Ascending aorta (tissue), 2 donors: ENCODE measurements at regions of chr12 and their contacts with region 1.

Region 1: GRCh38 chr12:55681142-55682077 is 26.3 kb downstream of the ITGA7 start:
- DNase-seq: peak; percentile 38 to 81
- H3K4me3 ChIP-seq: peak overlapping the region; percentile 4 to 34
- H3K27ac ChIP-seq: peak overlapping the region; percentile 4 to 15
- H3K4me1 ChIP-seq: peaks cover 5 to 7% of the 10 kb centered on the region in 2 donors
- H3K27me3 ChIP-seq: no peaks in the 10 kb centered on the region
- CTCF ChIP-seq: peak in 2 of 3 experiments; percentile 9 to 37

Region 2: DNA sequence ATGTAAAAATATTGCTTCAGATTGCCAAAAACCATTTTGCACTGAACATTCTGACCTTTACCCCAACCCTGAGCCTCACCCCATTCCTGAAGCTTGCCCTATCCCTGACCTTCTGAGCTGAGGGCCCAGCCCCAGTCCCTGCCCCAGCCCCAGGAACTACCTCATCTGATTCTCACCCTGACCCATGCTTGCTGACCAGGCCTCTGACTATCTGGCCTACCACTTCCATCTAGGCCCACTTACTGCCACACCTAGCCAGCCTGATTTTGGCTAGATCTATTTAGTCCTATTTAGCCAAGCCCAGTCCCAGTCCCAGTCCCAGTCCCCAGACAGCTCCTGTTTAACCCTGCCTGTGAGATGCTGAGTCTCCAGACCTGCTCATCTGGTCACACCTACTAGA is 11.1 kb before region 1 on chr12:
- intact Hi-C with region 1: no loop called
- DNase-seq: no peak
- H3K4me3 ChIP-seq: no peak overlapping the region
- H3K27ac ChIP-seq: no peak overlapping the region
- H3K4me1 ChIP-seq: no peaks in the 10 kb centered on the region
- H3K27me3 ChIP-seq: no peaks in the 10 kb centered on the region
- CTCF ChIP-seq: no peak

Region 3: DNA sequence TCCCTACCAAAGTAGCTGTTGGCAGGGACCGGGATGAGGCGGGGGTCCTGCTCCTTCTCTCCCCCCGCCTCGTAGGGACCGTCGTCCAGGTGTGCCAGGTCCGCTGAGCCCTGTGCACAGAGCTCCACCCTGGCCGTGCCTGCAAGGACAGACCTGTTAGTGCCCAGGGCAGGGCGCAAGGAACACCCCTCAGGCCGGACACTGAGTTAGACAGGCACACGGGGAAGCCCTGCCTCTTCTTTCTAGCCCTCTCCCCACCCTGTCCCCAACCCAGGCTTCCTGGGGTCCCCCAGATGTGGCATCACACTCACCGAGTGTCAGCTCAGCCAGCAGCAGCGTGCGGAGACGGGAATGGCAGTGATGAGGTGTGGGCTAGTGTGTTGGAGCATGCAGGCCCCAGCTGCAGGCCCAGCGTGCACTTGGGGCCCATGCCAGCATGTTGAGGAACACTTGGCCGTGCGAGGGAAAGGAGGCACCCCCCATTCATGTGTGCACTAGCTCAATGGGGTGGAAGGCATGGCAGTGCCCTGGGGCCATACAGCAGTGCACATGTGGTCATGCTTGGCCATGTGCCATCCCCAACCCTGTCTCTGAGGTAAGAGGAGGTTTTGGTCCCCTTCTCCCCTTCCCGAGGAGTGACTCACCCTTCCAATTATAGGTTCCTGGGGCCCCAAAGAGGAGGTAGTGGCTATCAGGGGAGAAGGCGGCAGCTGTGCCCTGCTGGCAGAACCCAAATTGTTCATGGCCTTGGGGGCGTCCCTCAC is 19.0 kb after region 1 on chr12:
- intact Hi-C with region 1: loop called (anchors 2 kb)
- DNase-seq: no peak
- H3K4me3 ChIP-seq: peak overlapping the region in 1 of 2 donors; percentile 19
- H3K27ac ChIP-seq: peak overlapping the region; percentile 42 to 47
- H3K4me1 ChIP-seq: peaks cover 2 to 32% of the 10 kb centered on the region in 2 donors
- H3K27me3 ChIP-seq: no peaks in the 10 kb centered on the region
- CTCF ChIP-seq: no peak

Region 4: DNA sequence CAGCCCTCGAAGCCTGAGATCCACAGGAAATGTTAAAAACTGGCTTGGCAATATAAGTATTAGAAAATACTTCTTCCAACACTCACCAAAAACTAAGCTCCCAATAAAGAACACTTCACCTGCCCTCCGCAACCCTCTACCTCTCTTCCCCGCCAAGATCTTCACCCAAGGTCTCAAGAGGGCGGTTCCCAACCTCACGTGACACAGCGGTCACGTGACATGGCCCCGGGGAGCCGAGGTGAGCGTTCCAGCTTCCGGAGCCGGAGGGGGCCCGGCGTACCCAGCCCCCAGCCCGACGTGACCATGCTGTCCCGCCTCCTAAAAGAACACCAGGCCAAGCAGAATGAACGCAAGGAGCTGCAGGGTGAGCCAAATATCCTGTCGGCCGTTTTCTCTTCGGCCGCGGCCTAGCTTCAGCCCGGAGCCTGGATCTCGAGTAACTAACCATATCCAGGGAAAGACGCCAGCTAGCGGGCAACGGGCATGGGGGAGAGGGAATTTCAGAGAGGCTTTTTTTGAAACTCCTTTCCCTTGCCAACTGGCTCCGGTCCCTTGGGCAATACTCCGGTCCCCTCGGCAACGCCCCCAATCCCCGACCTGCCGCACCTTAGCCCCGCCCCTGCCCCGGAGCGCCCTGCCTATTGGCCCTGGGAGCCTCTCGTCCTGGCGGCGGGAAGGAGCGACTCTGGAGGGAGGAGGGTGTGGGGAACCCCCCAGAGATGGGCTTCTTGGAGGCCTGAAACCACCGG is 34.6 kb after region 1 on chr12 and contains the start of gene BLOC1S1:
- intact Hi-C with region 1: loop called (anchors 1 kb)
- DNase-seq: peak; percentile 73 to 97
- H3K4me3 ChIP-seq: peak within 1 kb of the TSS; percentile 64 to 79
- H3K27ac ChIP-seq: peak within 1 kb of the TSS; percentile 86 to 88
- H3K4me1 ChIP-seq: peaks cover 41 to 73% of the 10 kb centered on the region in 2 donors
- H3K27me3 ChIP-seq: no peaks in the 10 kb centered on the region
- CTCF ChIP-seq: peak in 1 of 3 experiments; percentile 6
- total RNA-seq, gene BLOC1S1: 57.2 TPM

Region 5: GRCh38 chr12:55760663-55761062 is 79.3 kb after region 1 on chr12:
- intact Hi-C with region 1: no loop called
- DNase-seq: no peak
- H3K4me3 ChIP-seq: no peak overlapping the region
- H3K27ac ChIP-seq: no peak overlapping the region
- H3K4me1 ChIP-seq: no peaks in the 10 kb centered on the region
- H3K27me3 ChIP-seq: no peaks in the 10 kb centered on the region
- CTCF ChIP-seq: no peak

Region 6: GRCh38 chr12:56387152-56387736 is 705.8 kb after region 1 on chr12:
- intact Hi-C with region 1: no loop called
- DNase-seq: peak in 1 of 2 donors; percentile 34
- H3K4me3 ChIP-seq: no peak overlapping the region
- H3K27ac ChIP-seq: no peak overlapping the region
- H3K4me1 ChIP-seq: no peaks in the 10 kb centered on the region
- H3K27me3 ChIP-seq: no peaks in the 10 kb centered on the region
- CTCF ChIP-seq: no peak